ENCODE measurements at regions of chr10 and their contacts with region 1.

Region 1: GRCh38 chr10:31912898-31913852 is 15.5 kb downstream of the ARHGAP12 start:
- DNase-seq: no peak
- H3K4me3 ChIP-seq: peak overlapping the region; percentile 23
- H3K27ac ChIP-seq: no peak overlapping the region
- H3K27me3 ChIP-seq: no peaks in the 10 kb centered on the region
- CTCF ChIP-seq: no peak

Region 2: GRCh38 chr10:32174349-32174893 is 261.2 kb after region 1 on chr10:
- CTCF ChIA-PET with region 1: no interaction called
- POLR2A ChIA-PET with region 1: interaction called, 15 read pairs
- DNase-seq: no peak
- H3K4me3 ChIP-seq: no peak overlapping the region
- H3K27ac ChIP-seq: no peak overlapping the region
- H3K27me3 ChIP-seq: no peaks in the 10 kb centered on the region
- CTCF ChIP-seq: no peak

Measured in AG04450 (cell line).